MCF 10A (cell line): ENCODE measurements at regions of chr1 and their contacts with region 1.

Region 1: DNA sequence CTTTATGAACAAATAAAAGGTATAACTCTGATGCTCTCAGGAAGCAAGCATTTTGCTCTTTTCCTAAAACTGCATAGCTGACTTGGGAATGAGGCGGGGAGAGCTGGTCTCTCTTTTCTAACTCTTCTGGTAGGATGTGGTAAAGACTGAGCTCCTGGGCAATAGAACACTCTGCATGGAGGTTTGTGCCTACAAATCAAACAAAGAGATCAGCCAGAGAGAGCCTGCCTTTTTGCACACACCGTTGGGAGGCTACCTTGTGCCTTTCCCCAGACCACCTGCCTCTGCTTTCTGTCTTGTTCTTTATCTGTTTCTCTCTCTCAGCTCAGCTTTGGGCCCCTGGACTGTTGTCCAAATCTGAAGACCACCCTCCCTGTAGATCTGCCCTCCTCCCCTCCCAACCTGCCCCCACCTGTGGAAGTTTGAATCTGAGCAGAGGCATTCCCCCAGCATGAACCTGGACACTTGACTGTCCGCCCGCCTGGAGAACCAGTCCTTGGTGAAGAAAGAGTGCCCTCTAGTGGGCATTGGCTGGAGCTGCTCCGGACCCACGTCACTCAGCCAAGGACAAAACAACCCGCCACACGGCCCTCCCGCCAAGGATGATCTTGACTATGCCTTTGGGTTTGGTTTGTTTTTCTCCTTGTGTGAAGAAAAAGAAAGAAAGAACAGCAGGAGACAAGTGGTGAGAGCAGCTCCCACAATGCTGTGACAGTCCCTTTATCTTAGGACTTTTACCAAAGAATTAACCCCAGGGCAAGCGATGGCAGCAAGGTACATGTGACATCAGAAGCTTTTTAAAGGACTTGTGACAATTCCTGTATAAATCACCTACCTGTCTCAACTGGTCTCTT is 228.2 kb downstream of the PBX1 start:
- DNase-seq: peak; percentile 91
- H3K4me3 Mint-ChIP-seq: no peak overlapping the region
- H3K27ac Mint-ChIP-seq: no peak overlapping the region
- H3K4me1 Mint-ChIP-seq: peaks cover 38% of the 10 kb centered on the region
- H3K27me3 Mint-ChIP-seq: no peaks in the 10 kb centered on the region
- CTCF ChIP-seq: peak; percentile 98

Region 2: DNA sequence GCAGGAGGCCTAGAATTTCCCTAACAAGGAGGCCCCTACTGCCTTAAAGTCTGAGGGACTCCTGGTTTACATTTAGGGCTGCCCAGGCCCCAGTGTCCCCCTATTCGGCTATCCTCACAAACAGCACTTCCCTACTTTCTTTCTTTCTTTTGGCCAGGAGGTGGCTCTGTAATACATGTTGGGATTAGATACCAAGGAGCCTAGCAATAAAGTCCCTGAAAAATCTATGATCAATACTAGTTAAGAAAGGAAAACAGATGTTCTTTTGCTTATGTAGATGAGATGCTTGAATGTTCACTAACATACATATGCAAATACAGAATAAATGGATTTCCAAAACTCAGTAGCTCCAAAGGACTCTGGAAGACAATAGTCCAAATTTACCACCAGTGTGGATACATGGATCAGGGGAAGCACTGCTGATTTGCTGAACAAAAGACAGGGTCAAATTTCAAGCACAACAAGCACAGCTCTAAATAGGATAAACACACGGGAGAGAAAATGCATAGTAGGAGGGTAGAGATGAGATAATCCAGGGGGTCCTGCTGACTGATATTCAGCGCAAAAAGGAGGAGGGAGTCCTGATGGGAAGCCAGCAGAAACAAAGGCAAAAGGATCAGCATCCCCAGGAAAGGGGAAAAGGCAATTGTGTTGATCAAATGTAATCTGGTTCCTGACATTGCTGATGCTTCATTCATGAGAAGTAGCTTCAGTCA is 1225.5 kb before region 1 on chr1:
- CTCF ChIA-PET with region 1: interaction called, 6 read pairs
- POLR2A ChIA-PET with region 1: no interaction called
- intact Hi-C with region 1: loop called (anchors 10 kb)
- DNase-seq: peak; percentile 51
- H3K4me3 Mint-ChIP-seq: no peak overlapping the region
- H3K27ac Mint-ChIP-seq: no peak overlapping the region
- H3K4me1 Mint-ChIP-seq: no peaks in the 10 kb centered on the region
- H3K27me3 Mint-ChIP-seq: no peaks in the 10 kb centered on the region
- CTCF ChIP-seq: peak; percentile 42

Region 3: DNA sequence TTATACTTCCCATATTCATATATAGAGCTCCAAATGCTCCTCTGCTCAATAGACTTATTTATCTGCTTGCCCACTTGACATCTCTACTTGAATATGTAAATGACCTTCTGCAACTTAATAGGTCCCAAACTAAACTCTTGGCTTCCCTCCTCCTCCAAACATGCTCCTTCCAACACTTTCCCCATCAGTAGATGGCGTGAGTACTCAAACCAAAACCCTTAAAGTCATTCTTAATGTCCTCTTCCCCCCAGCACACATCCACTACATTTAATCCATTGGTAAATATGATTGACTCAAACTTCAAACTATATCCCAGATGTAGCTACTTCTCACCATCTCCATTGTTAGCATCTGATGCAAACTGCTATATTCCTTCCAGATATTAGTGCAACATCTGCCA is 276.8 kb before region 1 on chr1:
- CTCF ChIA-PET with region 1: interaction called, 18 read pairs
- POLR2A ChIA-PET with region 1: no interaction called
- intact Hi-C with region 1: loop called (anchors 5 kb)
- DNase-seq: peak; percentile 28
- H3K4me3 Mint-ChIP-seq: no peak overlapping the region
- H3K27ac Mint-ChIP-seq: no peak overlapping the region
- H3K4me1 Mint-ChIP-seq: no peaks in the 10 kb centered on the region
- H3K27me3 Mint-ChIP-seq: peaks cover 5% of the 10 kb centered on the region
- CTCF ChIP-seq: no peak

Region 4: DNA sequence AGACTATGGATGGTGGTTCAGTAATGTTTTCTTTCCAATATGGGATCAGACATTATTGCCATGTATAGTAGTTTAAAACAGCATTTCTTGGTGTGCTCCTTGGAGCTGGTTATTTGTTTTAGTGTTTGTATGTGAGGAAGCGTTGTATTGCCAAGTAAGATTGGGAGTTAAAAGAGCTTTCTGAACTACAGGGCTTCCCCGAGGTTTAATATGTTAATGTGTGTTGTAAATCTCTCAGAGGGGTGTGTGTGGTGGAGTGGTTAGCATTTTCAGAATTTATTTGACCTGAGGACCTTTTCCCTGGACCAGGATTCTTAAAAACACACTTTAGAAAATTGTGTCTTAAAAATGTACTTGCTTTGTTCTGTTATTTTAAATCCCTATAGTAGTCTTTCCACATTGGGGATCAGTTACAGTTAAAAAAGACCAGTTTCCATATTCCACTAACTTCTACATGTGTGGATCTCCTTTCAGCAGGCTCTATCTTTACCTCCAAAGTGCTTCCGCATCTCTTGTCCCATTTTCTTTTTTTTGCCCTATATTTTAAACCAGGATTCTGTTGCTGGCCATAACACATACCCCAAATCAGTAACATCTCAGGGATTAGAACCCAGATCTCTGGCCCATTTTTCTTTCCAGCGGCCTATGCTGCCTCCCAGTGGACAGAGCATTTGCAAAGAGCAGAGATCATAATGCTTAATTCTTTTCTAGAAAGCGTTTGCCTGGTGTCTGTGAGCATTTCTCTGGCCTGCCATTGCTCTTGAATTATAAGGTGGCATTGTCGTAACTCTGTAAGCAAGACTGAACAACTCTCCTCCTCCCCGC is 169.6 kb before region 1 on chr1:
- CTCF ChIA-PET with region 1: interaction called, 33 read pairs
- POLR2A ChIA-PET with region 1: interaction called, 14 read pairs
- intact Hi-C with region 1: loop called (anchors 1 kb)
- DNase-seq: peak; percentile 63
- H3K4me3 Mint-ChIP-seq: no peak overlapping the region
- H3K27ac Mint-ChIP-seq: no peak overlapping the region
- H3K4me1 Mint-ChIP-seq: peaks cover 14% of the 10 kb centered on the region
- H3K27me3 Mint-ChIP-seq: no peaks in the 10 kb centered on the region
- CTCF ChIP-seq: peak; percentile 89

Region 5: DNA sequence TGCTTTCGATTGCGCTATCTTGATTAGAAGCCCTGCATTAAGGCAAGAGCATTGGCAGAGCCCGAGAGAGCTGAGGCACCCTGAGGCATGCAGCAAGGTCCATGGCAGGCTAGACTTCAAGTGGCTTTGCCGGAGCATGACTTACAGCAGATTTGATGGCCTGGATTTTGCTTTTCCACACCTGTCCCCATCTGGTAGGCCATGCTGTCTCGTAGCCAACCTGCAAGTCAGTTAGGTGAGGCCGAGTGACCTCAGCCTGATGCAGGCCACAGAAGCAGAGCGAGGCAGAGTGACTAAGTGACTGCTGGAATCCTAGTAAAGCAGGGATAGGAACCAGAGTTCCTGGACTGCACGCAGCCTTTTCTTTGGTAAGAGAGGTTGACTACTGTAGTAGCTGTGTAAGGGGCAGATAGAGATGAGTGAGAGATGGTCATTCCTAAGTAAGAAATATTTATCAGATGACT is 79.3 kb before region 1 on chr1:
- CTCF ChIA-PET with region 1: interaction called, 11 read pairs
- POLR2A ChIA-PET with region 1: interaction called, 4 read pairs
- intact Hi-C with region 1: loop called (anchors 5 kb)
- DNase-seq: peak; percentile 67
- H3K4me3 Mint-ChIP-seq: no peak overlapping the region
- H3K27ac Mint-ChIP-seq: peak overlapping the region; percentile 70
- H3K4me1 Mint-ChIP-seq: peaks cover 22% of the 10 kb centered on the region
- H3K27me3 Mint-ChIP-seq: no peaks in the 10 kb centered on the region
- CTCF ChIP-seq: no peak

Region 6: GRCh38 chr1:165073185-165074007 is 286.2 kb after region 1 on chr1:
- CTCF ChIA-PET with region 1: interaction called, 35 read pairs
- POLR2A ChIA-PET with region 1: no interaction called
- intact Hi-C with region 1: loop called (anchors 2 kb)
- DNase-seq: peak; percentile 80
- H3K4me3 Mint-ChIP-seq: no peak overlapping the region
- H3K27ac Mint-ChIP-seq: no peak overlapping the region
- H3K4me1 Mint-ChIP-seq: no peaks in the 10 kb centered on the region
- H3K27me3 Mint-ChIP-seq: no peaks in the 10 kb centered on the region
- CTCF ChIP-seq: peak; percentile 95